ENCODE measurements at regions of chr1 and their contacts with region 1.

Region 1: GRCh38 chr1:8239306-8240023 is 78.4 kb upstream of the SLC45A1 start:
- DNase-seq: no peak
- ATAC-seq: peak; percentile 45
- H3K4me3 ChIP-seq: no peak overlapping the region
- H3K27ac ChIP-seq: no peak overlapping the region
- H3K4me1 ChIP-seq: no peaks in the 10 kb centered on the region
- H3K27me3 ChIP-seq: no peaks in the 10 kb centered on the region

Region 2: GRCh38 chr1:8302081-8302956 is 62.9 kb after region 1 on chr1:
- intact Hi-C with region 1: loop called in 1 of 2 experiments (anchors 10 kb)
- DNase-seq: no peak
- ATAC-seq: no peak
- H3K4me3 ChIP-seq: no peak overlapping the region
- H3K27ac ChIP-seq: peak overlapping the region; percentile 31 to 59
- H3K4me1 ChIP-seq: peaks cover 3 to 8% of the 10 kb centered on the region in 2 donors
- H3K27me3 ChIP-seq: no peaks in the 10 kb centered on the region

Region 3: GRCh38 chr1:8456308-8456912 is 216.9 kb after region 1 on chr1:
- intact Hi-C with region 1: no loop called
- DNase-seq: no peak
- ATAC-seq: no peak
- H3K4me3 ChIP-seq: no peak overlapping the region
- H3K27ac ChIP-seq: peak overlapping the region in 1 of 2 donors; percentile 85
- H3K4me1 ChIP-seq: peaks cover 1 to 15% of the 10 kb centered on the region in 2 donors
- H3K27me3 ChIP-seq: no peaks in the 10 kb centered on the region